ENCODE measurements at regions of chr3 and their contacts with region 1.

Region 1: GRCh38 chr3:16848007-16848406 is 36.7 kb upstream of the PLCL2 start:
- DNase-seq: no peak
- ATAC-seq: no peak
- H3K4me3 Mint-ChIP-seq: no peak overlapping the region
- H3K27ac Mint-ChIP-seq: no peak overlapping the region
- H3K4me1 Mint-ChIP-seq: peaks cover 39% of the 10 kb centered on the region
- H3K27me3 Mint-ChIP-seq: no peaks in the 10 kb centered on the region
- CTCF ChIP-seq: no peak

Region 2: GRCh38 chr3:17730318-17730967 is 882.4 kb after region 1 on chr3:
- CTCF ChIA-PET with region 1: no interaction called
- POLR2A ChIA-PET with region 1: interaction called, 10 read pairs
- intact Hi-C with region 1: no loop called
- DNase-seq: no peak
- ATAC-seq: no peak
- H3K4me3 Mint-ChIP-seq: no peak overlapping the region
- H3K27ac Mint-ChIP-seq: no peak overlapping the region
- H3K4me1 Mint-ChIP-seq: peaks cover 33% of the 10 kb centered on the region
- H3K27me3 Mint-ChIP-seq: no peaks in the 10 kb centered on the region
- CTCF ChIP-seq: no peak

Measured in activated B cell treated with CpG ODN at 0.5 μM for 24 hours (primary cell).